ENCODE measurements at regions of chr21 and their contacts with region 1.

Region 1: GRCh38 chr21:38355992-38356797 is 99.4 kb downstream of the KCNJ15 start:
- DNase-seq: peak; percentile 77
- H3K4me3 Mint-ChIP-seq: no peak overlapping the region
- H3K27ac Mint-ChIP-seq: no peak overlapping the region
- H3K4me1 Mint-ChIP-seq: peaks cover 7% of the 10 kb centered on the region
- H3K27me3 Mint-ChIP-seq: no peaks in the 10 kb centered on the region
- CTCF ChIP-seq: peak; percentile 96

Region 2: GRCh38 chr21:37700641-37701202 is 655.5 kb before region 1 on chr21:
- CTCF ChIA-PET with region 1: interaction called, 16 read pairs
- POLR2A ChIA-PET with region 1: no interaction called
- intact Hi-C with region 1: loop called (anchors 1 kb)
- DNase-seq: peak; percentile 88
- H3K4me3 Mint-ChIP-seq: no peak overlapping the region
- H3K27ac Mint-ChIP-seq: no peak overlapping the region
- H3K4me1 Mint-ChIP-seq: no peaks in the 10 kb centered on the region
- H3K27me3 Mint-ChIP-seq: peaks cover 24% of the 10 kb centered on the region
- CTCF ChIP-seq: peak; percentile 57

Region 3: GRCh38 chr21:37916310-37917051 is 439.7 kb before region 1 on chr21 and contains the start of gene KCNJ6:
- CTCF ChIA-PET with region 1: interaction called, 4 read pairs
- POLR2A ChIA-PET with region 1: no interaction called
- intact Hi-C with region 1: loop called (anchors 2 kb)
- DNase-seq: peak; percentile 48
- H3K4me3 Mint-ChIP-seq: peak within 1 kb of the TSS; percentile 70
- H3K27ac Mint-ChIP-seq: no peak within 1 kb of the TSS
- H3K4me1 Mint-ChIP-seq: peaks cover 11% of the 10 kb centered on the region
- H3K27me3 Mint-ChIP-seq: peaks cover 31% of the 10 kb centered on the region
- CTCF ChIP-seq: peak; percentile 84
- total RNA-seq, gene KCNJ6: 0.20 and 0.28 TPM in 2 replicates

Region 4: DNA sequence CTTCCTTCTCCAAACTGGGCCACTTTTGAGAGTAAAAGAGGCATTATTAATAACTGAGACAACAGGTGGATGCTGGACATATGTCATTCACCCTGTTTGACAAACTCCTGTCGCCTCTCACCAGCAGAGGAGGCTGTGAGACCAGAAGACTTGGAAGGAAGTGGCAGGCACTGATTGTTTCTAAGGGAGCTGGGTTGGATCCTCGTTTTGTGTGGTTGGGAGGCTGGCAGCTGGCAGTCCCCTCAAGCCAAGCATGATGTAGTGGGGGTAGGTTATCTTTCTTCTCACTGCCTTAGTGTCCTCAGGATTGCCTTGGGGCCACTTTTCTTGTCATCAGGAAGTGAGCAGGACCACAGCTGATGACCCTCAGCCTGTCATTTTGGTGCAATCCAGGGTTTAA is 185.9 kb before region 1 on chr21:
- CTCF ChIA-PET with region 1: interaction called, 47 read pairs
- POLR2A ChIA-PET with region 1: no interaction called
- intact Hi-C with region 1: loop called (anchors 1 kb)
- DNase-seq: peak; percentile 68
- H3K4me3 Mint-ChIP-seq: no peak overlapping the region
- H3K27ac Mint-ChIP-seq: no peak overlapping the region
- H3K4me1 Mint-ChIP-seq: peaks cover 26% of the 10 kb centered on the region
- H3K27me3 Mint-ChIP-seq: no peaks in the 10 kb centered on the region
- CTCF ChIP-seq: peak; percentile 38

Region 5: DNA sequence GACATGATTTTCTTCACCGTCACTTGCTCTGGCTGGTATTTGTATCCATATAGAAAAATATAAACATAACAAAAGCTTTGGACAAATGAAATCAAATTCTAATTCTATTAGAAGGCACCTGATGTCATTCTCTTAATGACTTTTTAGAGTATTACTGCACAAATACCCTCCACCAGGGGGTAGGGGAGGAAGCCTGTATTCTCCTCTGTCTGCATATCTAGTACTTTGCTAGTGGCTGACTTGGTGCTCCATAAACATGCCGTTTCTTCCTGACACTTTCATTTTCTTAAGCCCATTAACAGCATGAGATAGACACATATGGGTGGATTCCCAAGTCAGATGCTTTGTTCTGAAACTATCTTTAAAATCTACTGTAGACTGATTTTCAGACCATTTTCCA is 120.0 kb before region 1 on chr21:
- CTCF ChIA-PET with region 1: interaction called, 29 read pairs
- POLR2A ChIA-PET with region 1: no interaction called
- intact Hi-C with region 1: loop called (anchors 5 kb)
- DNase-seq: peak; percentile 42
- H3K4me3 Mint-ChIP-seq: peak overlapping the region; percentile 30
- H3K27ac Mint-ChIP-seq: peak overlapping the region; percentile 22
- H3K4me1 Mint-ChIP-seq: peaks cover 39% of the 10 kb centered on the region
- H3K27me3 Mint-ChIP-seq: no peaks in the 10 kb centered on the region
- CTCF ChIP-seq: no peak

Region 6: GRCh38 chr21:39066829-39067780 is 710.9 kb after region 1 on chr21:
- CTCF ChIA-PET with region 1: no interaction called
- POLR2A ChIA-PET with region 1: no interaction called
- intact Hi-C with region 1: no loop called
- DNase-seq: no peak
- H3K4me3 Mint-ChIP-seq: no peak overlapping the region
- H3K27ac Mint-ChIP-seq: no peak overlapping the region
- H3K4me1 Mint-ChIP-seq: no peaks in the 10 kb centered on the region
- H3K27me3 Mint-ChIP-seq: no peaks in the 10 kb centered on the region
- CTCF ChIP-seq: no peak

Region 7: GRCh38 chr21:39137248-39138178 is 781.3 kb after region 1 on chr21:
- CTCF ChIA-PET with region 1: interaction called, 6 read pairs
- POLR2A ChIA-PET with region 1: no interaction called
- intact Hi-C with region 1: loop called (anchors 1 kb)
- DNase-seq: peak; percentile 84
- H3K4me3 Mint-ChIP-seq: no peak overlapping the region
- H3K27ac Mint-ChIP-seq: no peak overlapping the region
- H3K4me1 Mint-ChIP-seq: peaks cover 14% of the 10 kb centered on the region
- H3K27me3 Mint-ChIP-seq: no peaks in the 10 kb centered on the region
- CTCF ChIP-seq: no peak

Measured in MCF 10A (cell line).